ENCODE measurements at regions of chr13 and their contacts with region 1.

Region 1: DNA sequence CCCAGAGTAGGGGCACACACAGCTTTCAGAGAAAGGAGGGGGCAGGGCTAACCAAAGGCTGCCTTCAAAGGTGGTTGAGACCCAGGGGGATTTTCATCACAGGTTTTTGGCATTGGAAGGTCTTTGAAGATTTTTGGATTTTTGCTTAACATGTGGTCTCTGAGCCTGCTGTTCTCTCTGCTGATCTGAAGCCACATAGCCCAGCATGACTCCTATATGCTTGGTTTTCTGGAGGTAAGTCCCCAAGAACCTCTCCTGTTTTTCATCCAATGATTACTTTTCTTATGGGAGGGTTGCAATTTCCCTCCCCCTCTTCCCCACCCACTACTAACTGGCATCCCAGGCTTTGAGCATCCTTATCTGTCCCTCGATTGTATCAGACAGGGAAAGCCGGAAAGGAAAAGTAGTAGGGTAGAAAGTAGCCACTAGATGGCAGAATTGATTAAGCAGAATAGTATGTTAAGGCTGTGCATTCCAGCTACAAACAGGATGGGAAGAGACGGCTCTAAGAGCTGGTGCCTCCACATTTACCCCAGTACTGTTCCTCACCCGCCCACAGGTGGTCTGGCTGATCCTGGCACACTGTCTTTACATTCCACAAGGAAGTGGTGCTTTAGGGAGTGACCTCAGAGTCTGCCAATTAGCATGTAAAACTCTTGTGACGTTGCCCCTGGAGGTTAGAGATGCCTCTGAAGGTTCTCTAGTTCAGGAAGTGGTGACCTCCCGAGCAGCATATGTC is 218.9 kb upstream of the EDNRB start:
- DNase-seq: peak in 2 of 5 donors; percentile 6 to 41
- H3K4me3 ChIP-seq: no peak overlapping the region
- H3K4me3 Mint-ChIP-seq: peak overlapping the region in 6 of 7 donors; percentile 29 to 78 (median 69)
- H3K27ac ChIP-seq: no peak overlapping the region
- H3K27ac Mint-ChIP-seq: peak overlapping the region in 2 of 8 donors; percentile 18 to 29
- H3K4me1 ChIP-seq: peaks cover 4% of the 10 kb centered on the region
- H3K4me1 Mint-ChIP-seq: peaks cover 5 to 12% (median 6%) of the 10 kb centered on the region in 3 donors
- H3K27me3 ChIP-seq: no peaks in the 10 kb centered on the region
- H3K27me3 Mint-ChIP-seq: peaks cover 0 to 9% of the 10 kb centered on the region in 2 donors

Region 2: GRCh38 chr13:78098249-78098648 is 39.3 kb before region 1 on chr13:
- CTCF ChIA-PET with region 1: no interaction called
- POLR2A ChIA-PET with region 1: no interaction called
- DNase-seq: no peak
- H3K4me3 ChIP-seq: no peak overlapping the region
- H3K4me3 Mint-ChIP-seq: no peak overlapping the region
- H3K27ac ChIP-seq: no peak overlapping the region
- H3K27ac Mint-ChIP-seq: no peak overlapping the region
- H3K4me1 ChIP-seq: no peaks in the 10 kb centered on the region
- H3K4me1 Mint-ChIP-seq: no peaks in the 10 kb centered on the region
- H3K27me3 ChIP-seq: no peaks in the 10 kb centered on the region
- H3K27me3 Mint-ChIP-seq: peaks cover 0 to 10% of the 10 kb centered on the region in 2 donors

Region 3: DNA sequence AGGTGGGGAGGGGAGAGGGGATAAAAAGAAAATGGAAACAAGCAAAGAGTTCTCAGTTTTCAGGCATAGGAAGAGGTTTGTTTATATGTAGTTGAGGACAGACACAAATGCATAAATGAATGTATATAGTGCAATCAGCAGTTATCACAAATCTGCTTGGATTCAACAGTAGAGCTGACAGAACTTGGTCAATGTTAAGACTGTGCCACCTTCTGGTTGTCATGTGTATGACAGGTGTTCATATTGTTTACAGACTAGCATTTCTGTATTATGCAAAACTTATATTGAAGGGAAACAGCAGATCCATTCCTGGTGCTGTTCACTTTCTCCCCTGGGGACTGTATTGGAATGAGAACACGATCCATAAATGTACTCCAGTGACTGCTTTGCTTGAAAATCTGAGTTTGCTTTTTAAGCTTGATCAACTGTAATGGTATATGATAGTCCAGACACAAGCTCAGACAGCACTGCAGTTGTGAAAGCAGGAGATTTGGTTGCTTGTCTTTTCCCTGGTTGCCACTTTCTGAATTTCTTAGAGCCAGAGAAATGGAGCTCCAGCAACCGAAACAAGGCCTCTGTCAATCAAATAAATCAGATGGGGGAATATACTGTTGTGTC is 840.9 kb after region 1 on chr13:
- CTCF ChIA-PET with region 1: interaction called, 33 read pairs
- POLR2A ChIA-PET with region 1: no interaction called
- DNase-seq: peak in 4 of 5 donors; percentile 3 to 47 (median 24)
- H3K4me3 ChIP-seq: no peak overlapping the region
- H3K4me3 Mint-ChIP-seq: no peak overlapping the region
- H3K27ac ChIP-seq: no peak overlapping the region
- H3K27ac Mint-ChIP-seq: no peak overlapping the region
- H3K4me1 ChIP-seq: no peaks in the 10 kb centered on the region
- H3K4me1 Mint-ChIP-seq: no peaks in the 10 kb centered on the region
- H3K27me3 ChIP-seq: no peaks in the 10 kb centered on the region
- H3K27me3 Mint-ChIP-seq: peaks cover 8 to 31% of the 10 kb centered on the region in 2 donors

Measured in CD8-positive, alpha-beta memory T cell (primary cell).